ENCODE measurements at regions of chr10 and their contacts with region 1.

Region 1: DNA sequence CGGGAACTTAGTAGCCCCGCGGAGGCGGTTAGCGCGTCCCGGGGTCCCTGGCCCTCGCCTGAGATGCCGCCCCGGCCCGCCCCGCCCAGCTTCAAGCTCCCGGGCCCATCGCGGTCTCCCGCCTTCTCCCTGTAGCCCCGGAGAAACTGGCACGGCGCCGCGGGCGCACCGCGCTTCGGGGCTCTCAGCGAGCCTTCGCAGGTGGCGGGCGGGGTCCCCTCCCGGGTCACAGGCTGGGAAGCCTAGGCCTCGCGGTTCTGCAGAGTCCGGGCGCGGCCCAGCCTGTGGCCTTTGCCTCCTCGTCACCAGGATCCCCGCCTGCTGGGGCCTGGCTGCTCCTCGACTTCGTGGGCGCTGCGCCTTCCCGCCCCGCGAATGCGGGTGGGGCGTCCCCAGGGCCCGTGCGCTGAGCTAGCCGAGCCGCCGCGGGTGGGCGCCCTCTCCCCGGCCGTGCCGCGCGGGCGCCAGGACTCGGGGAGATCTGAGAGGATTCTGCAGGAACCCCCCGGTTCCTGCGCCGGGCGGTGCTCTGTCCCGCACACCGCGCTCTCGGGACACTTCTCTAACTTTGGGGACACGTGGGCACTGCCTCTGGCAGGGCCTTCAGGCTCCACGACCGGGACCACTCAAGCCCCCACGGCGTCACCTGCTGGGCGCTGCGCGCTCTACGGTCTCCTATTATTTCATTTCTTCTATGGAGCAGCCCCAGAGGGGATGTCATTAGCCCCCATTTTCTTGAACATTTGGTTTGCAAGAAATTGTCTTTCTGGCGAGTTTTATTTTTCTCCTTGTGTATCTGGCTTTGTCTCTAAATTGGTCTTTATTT is 682 bp upstream of the RGS10 start:
- DNase-seq: no peak
- H3K4me3 ChIP-seq: peak overlapping the region; percentile 77
- H3K27me3 ChIP-seq: peaks cover under 1% of the 10 kb centered on the region
- CTCF ChIP-seq: peak; percentile 62

Region 2: DNA sequence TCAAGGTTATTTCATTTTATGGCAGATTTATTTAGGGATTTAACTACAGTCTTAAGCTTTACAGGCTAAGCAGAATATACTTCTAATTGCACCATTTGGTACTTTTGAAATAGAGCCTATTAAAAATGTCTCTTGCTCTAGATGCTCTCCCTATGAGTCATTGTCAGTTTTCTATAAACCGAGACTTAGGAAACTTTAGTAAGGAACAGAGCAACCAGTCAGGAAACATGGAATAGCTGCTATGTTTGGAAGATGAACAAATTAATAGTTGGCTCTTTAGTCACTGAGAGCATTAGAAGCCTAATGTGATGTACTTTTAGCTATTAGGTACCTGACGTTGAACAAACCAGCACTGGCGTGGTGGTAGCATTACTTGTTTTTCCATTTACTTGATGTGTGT is 217.9 kb after region 1 on chr10:
- CTCF ChIA-PET with region 1: no interaction called
- POLR2A ChIA-PET with region 1: interaction called, 15 read pairs
- DNase-seq: peak; percentile 88
- H3K4me3 ChIP-seq: no peak overlapping the region
- H3K27me3 ChIP-seq: no peaks in the 10 kb centered on the region
- CTCF ChIP-seq: no peak

Measured in BJ (cell line).